A673 (cell line): ENCODE measurements at regions of chr1 and their contacts with region 1.

Region 1: GRCh38 chr1:101309334-101310311 is 72.8 kb downstream of the S1PR1 start:
- DNase-seq: peak; percentile 66
- H3K4me3 ChIP-seq: peak overlapping the region; percentile 34
- H3K27ac ChIP-seq: no peak overlapping the region
- H3K4me1 ChIP-seq: peaks cover 4% of the 10 kb centered on the region
- H3K27me3 ChIP-seq: no peaks in the 10 kb centered on the region
- CTCF ChIP-seq: peak; percentile 93

Region 2: DNA sequence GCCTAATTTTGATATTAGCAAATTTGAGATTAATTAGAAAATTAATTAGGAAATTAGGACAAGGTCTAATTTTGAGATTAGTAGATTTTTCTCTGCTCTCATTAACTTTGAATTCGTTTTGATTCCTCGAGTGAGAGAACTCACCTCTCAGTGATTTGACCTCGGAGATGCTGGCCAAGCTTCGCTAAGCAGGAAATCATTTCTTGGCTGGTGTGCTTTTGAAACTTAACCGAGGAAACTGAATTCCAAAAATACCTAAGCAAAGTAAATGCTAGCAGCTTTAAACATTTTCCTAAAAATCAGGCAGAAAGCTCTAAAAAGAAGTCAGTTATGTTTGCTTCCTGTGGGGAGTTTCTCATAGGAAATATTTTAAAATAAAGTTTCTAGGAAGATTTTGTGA is 922.4 kb before region 1 on chr1:
- CTCF ChIA-PET with region 1: no interaction called
- POLR2A ChIA-PET with region 1: no interaction called
- intact Hi-C with region 1: no loop called
- DNase-seq: no peak
- H3K4me3 ChIP-seq: no peak overlapping the region
- H3K27ac ChIP-seq: no peak overlapping the region
- H3K4me1 ChIP-seq: no peaks in the 10 kb centered on the region
- H3K27me3 ChIP-seq: no peaks in the 10 kb centered on the region
- CTCF ChIP-seq: no peak

Region 3: GRCh38 chr1:101338714-101339430 is 29.2 kb after region 1 on chr1:
- CTCF ChIA-PET with region 1: no interaction called
- POLR2A ChIA-PET with region 1: no interaction called
- intact Hi-C with region 1: no loop called
- DNase-seq: no peak
- H3K4me3 ChIP-seq: no peak overlapping the region
- H3K27ac ChIP-seq: no peak overlapping the region
- H3K4me1 ChIP-seq: no peaks in the 10 kb centered on the region
- H3K27me3 ChIP-seq: no peaks in the 10 kb centered on the region
- CTCF ChIP-seq: no peak

Region 4: DNA sequence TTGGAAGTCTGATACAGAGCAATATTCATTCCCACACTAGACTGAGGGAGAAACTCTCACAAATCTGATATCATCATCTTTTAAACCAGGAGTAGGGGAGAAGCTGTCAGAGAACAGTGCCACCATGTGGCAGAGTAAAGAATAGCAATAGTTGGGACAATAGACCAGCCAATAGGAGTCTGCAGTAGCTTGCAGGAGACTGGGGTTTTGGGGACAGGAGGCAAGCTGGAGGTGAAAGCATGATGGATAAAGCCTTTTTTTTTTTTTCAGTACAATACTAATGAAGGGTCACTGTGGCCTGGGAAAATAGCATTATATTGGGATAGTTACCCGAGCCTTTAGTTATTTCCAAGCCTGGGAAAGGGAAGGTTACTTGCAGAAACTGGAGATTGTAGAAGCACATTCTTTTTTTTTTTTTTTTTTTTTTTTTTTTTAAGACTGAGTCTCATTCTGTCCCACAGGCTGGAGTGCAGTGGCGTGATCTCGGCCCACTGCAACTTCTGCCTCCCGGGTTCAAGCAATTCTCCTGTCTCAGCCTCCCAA is 47.9 kb after region 1 on chr1:
- CTCF ChIA-PET with region 1: interaction called, 48 read pairs
- POLR2A ChIA-PET with region 1: no interaction called
- intact Hi-C with region 1: loop called (anchors 1 kb)
- DNase-seq: peak; percentile 83
- H3K4me3 ChIP-seq: no peak overlapping the region
- H3K27ac ChIP-seq: no peak overlapping the region
- H3K4me1 ChIP-seq: no peaks in the 10 kb centered on the region
- H3K27me3 ChIP-seq: no peaks in the 10 kb centered on the region
- CTCF ChIP-seq: peak; percentile 94

Region 5: DNA sequence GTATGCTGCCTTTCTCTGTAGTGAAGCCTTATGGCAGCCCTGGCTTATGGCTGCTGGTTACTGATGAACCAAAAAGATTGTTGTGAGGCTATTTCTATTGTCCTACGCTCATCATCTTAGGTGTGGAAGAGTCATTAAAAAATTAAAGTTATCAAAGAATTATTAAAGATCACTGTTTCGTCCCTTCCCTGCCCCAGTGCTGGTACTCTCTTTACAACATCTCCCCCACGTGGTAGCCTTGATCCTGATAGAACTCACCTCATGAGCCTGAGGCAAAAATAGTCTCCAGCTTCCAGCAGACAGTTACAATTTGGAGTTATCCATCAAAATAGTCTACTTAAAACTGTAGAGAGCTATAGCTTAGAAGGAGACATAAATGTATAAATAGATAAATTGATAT is 128.7 kb after region 1 on chr1:
- CTCF ChIA-PET with region 1: interaction called, 14 read pairs
- POLR2A ChIA-PET with region 1: no interaction called
- intact Hi-C with region 1: loop called (anchors 5 kb)
- DNase-seq: no peak
- H3K4me3 ChIP-seq: no peak overlapping the region
- H3K27ac ChIP-seq: no peak overlapping the region
- H3K4me1 ChIP-seq: no peaks in the 10 kb centered on the region
- H3K27me3 ChIP-seq: no peaks in the 10 kb centered on the region
- CTCF ChIP-seq: peak; percentile 46